AG04449 (cell line): ENCODE measurements at regions of chr17 and their contacts with region 1.

Region 1: GRCh38 chr17:50139950-50140871 is 10.3 kb upstream of the SAMD14 start:
- DNase-seq: no peak
- H3K4me3 ChIP-seq: no peak overlapping the region
- CTCF ChIP-seq: peak; percentile 94

Region 2: DNA sequence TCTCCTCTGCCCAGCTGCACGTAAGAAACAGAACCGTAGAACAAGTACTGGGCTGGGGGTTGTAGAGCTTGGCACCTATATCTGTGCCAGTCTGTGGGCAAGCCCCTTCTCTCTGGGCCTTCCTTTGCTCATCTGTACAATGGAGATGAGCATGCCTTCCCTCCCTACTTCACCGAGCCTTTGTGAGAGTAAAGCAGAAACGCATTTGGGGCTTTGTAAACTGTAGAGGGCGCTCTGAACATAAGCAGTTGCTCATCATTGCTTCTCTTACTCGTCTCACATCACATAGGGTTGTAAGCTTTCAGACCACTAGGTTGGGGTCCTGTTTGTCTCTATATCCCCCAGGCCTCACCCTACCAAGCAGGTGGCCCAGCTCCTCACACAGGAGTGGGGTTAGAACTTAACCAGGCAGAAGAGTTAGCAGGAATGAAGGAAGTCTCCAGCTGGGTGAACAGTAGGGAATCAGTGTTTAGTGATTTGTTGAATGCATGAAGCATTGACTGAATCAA is 25.3 kb before region 1 on chr17:
- CTCF ChIA-PET with region 1: interaction called, 72 read pairs
- POLR2A ChIA-PET with region 1: no interaction called
- DNase-seq: no peak
- H3K4me3 ChIP-seq: no peak overlapping the region
- CTCF ChIP-seq: peak; percentile 69

Region 3: GRCh38 chr17:50129728-50130558 is 10.3 kb before region 1 on chr17 and contains the start of gene SAMD14:
- CTCF ChIA-PET with region 1: interaction called, 26 read pairs
- POLR2A ChIA-PET with region 1: no interaction called
- DNase-seq: no peak
- H3K4me3 ChIP-seq: peak within 1 kb of the TSS; percentile 67
- CTCF ChIP-seq: no peak

Region 4: GRCh38 chr17:50169121-50169764 is 29.0 kb after region 1 on chr17:
- CTCF ChIA-PET with region 1: interaction called, 14 read pairs
- POLR2A ChIA-PET with region 1: no interaction called
- DNase-seq: no peak
- H3K4me3 ChIP-seq: no peak overlapping the region
- CTCF ChIP-seq: peak; percentile 84

Region 5: DNA sequence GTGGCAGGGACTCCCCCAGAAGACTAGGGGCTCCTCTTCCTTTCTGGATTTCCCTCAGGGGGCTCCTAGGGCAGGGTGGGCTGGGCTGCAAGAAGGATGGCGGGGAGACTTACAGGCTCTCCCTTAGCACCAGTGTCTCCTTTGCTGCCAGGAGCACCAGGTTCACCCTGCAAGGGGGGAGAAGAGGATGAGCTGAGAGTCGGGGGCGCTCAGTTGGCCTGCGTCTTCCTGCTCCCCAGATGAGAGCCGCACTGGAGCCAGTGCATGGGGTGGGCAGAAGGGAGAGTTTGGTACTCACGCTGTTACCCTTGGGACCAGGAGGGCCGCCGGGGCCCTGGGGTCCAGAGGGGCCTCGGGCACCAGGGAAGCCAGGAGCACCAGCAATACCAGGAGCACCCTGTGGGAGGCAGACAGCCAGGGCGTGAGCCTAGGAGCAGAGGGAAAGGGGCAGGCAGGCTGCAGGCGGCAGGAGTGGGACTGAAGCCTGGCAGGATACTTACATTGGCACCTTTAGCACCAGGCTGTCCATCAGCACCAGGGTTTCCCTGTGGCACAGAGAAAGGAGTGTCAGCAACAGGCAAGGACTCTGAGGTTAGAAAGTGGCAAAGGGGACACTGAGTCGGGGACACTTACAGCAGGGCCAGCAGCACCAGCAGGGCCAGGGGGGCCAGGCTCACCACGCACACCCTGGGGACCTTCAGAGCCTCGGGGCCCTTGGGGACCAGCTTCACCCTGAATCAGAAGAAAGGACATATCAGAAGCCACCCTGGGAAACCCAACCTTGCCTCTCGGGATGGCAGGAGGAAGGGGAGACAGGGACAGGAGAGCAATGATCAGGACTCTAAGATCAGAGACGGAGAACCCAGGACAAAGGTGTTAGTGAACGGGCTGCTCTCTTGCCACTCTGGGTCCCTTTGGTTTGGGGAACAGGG is 55.0 kb after region 1 on chr17:
- CTCF ChIA-PET with region 1: no interaction called
- POLR2A ChIA-PET with region 1: no interaction called
- DNase-seq: no peak
- H3K4me3 ChIP-seq: peak overlapping the region; percentile 100
- CTCF ChIP-seq: peak; percentile 65